Activated CD4-positive, alpha-beta T cell treated with anti-CD3 and anti-CD28 coated beads for 36 hours (primary cell): ENCODE measurements at regions of chr4 and their contacts with region 1.

Region 1: GRCh38 chr4:33160126-33160525 is 2440.0 kb downstream of the PCDH7 start:
- DNase-seq: no peak
- ATAC-seq: no peak
- H3K4me3 Mint-ChIP-seq: no peak overlapping the region
- H3K27ac Mint-ChIP-seq: no peak overlapping the region
- H3K4me1 Mint-ChIP-seq: no peaks in the 10 kb centered on the region
- H3K27me3 Mint-ChIP-seq: no peaks in the 10 kb centered on the region

Region 2: DNA sequence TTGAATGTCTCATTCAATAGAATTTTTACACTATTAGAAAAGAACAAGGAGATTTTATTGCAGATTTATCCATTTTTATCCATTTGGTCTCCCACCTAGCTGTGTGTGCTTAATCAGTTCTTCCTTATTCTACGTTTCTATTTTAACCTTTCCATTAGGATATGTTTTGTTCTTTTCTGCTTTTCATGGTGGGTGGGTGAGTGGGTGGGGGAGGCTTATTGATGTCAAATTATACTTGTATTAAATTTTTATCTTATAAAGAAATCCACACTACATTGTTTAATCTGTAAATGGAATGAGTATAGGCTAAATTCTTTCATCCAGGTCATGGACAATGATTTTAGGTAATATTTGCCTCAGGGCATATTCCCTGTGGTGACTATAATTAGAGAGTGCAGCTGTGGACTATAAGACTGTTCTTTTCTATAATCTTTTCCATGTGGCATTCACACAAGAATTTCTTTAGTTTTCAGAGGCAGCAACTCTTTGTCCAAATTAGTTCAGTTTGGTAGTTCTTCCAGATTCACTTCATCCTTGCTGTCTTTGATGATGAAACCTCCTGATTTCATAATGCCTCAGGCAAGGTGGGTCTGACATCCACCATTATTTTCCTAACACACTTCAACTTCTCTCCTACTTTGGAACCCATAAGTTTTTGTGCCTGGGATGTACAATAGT is 11.9 kb after region 1 on chr4:
- CTCF ChIA-PET with region 1: no interaction called
- POLR2A ChIA-PET with region 1: no interaction called
- intact Hi-C with region 1: loop called in 1 of 2 experiments (anchors 1 kb)
- DNase-seq: no peak
- ATAC-seq: no peak
- H3K4me3 Mint-ChIP-seq: no peak overlapping the region
- H3K27ac Mint-ChIP-seq: no peak overlapping the region
- H3K4me1 Mint-ChIP-seq: no peaks in the 10 kb centered on the region
- H3K27me3 Mint-ChIP-seq: no peaks in the 10 kb centered on the region

Region 3: GRCh38 chr4:34293459-34293858 is 1133.3 kb after region 1 on chr4:
- CTCF ChIA-PET with region 1: no interaction called
- POLR2A ChIA-PET with region 1: no interaction called
- intact Hi-C with region 1: no loop called
- DNase-seq: no peak
- ATAC-seq: no peak
- H3K4me3 Mint-ChIP-seq: no peak overlapping the region
- H3K27ac Mint-ChIP-seq: no peak overlapping the region
- H3K4me1 Mint-ChIP-seq: no peaks in the 10 kb centered on the region
- H3K27me3 Mint-ChIP-seq: no peaks in the 10 kb centered on the region